Endothelial cell of umbilical vein (primary cell): ENCODE measurements at regions of chr17 and their contacts with region 1.

Region 1: DNA sequence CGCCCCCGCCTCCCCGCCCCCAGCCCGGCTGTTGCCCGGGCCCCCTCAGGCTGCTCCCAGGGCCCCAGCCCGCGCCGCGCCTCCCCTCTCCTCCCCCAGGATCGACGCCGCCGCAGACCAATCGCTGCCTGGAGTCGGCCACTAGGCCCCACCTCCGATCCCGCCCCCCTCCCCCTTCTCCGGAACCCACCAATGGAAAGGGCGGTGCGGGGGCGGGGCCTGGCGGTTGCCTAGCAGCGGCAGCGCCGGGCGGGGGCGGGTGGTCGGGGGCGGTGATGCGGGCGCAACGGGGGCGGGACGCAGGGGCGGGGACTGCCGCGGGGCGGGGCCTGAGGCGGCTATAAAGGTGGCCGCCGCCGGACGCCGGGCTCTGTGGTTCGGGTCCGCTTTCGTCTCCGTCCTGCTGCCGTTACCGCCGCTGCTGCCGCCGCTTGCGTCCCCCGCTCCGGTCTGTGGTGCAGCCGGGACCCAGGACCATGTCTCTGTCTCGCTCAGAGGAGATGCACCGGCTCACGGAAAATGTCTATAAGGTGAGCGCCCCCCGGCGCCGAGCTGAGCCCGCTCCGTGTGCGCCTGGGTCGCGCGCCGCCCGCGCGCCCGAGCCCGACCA is at the start of gene BAIAP2:
- DNase-seq: peak; percentile 88
- H3K4me3 ChIP-seq: peak within 1 kb of the TSS; percentile 43 to 72 (median 67)
- H3K27ac ChIP-seq: peak within 1 kb of the TSS; percentile 9
- H3K4me1 ChIP-seq: peaks cover 10% of the 10 kb centered on the region
- H3K27me3 ChIP-seq: no peaks in the 10 kb centered on the region
- CTCF ChIP-seq: peak in 1 of 2 donors; percentile 14
- POLR2A ChIP-seq: peak; percentile 99
- total RNA-seq, gene BAIAP2: 18.6 and 21.4 TPM in 2 replicates

Region 2: DNA sequence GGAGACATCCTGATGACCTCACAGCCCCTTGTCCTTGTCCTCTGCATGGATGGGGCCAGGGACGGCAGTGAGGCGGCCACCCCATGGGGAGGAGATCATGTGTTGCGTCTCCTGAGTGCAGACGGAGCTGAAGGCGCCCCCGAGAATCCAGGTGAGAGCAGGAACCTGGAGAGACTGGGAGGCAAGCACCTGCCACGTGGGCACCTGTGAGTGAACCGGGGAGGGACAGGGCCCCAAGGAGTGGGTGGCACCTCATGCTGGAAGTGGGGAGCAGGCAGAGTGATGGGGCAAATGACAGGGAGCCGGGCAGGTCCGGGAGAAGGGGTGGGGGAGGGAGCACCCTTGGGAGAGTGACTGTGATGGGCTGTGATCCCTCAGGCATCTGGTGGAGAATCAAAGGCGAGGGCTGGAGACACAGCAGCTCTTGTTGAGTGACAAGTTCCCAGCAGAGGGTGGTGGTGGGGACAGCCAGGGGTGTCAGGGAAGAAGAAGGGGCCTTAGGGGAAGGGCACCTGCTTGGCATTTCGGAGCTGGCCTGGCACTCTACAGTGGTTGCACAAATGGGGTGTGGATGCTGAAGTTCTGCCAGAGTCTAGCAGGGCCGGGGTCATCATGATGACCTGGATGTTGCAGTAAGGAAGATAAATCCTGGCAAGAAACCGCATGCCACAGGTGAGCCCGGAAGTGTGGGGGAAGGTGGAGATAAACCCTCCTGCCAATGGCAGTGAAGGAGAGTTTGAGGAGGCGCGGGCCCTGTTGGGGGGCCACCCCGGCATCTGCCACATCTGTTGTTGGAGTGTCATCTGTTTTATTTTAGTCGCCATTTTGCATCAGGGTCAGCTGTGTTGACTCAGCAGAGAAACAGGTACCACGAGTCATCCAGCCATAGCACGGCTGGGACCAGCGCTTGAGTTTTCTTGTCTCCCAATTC is 217.3 kb before region 1 on chr17:
- CTCF ChIA-PET with region 1: no interaction called
- POLR2A ChIA-PET with region 1: no interaction called
- dilution Hi-C with region 1: no loop called
- intact Hi-C with region 1: no loop called
- DNase-seq: no peak
- H3K4me3 ChIP-seq: no peak overlapping the region
- H3K27ac ChIP-seq: no peak overlapping the region
- H3K4me1 ChIP-seq: no peaks in the 10 kb centered on the region
- H3K27me3 ChIP-seq: no peaks in the 10 kb centered on the region
- CTCF ChIP-seq: no peak
- POLR2A ChIP-seq: no peak

Region 3: GRCh38 chr17:81018044-81018802 is 16.7 kb before region 1 on chr17:
- CTCF ChIA-PET with region 1: interaction called, 19 read pairs
- POLR2A ChIA-PET with region 1: interaction called, 4 read pairs
- dilution Hi-C with region 1: no loop called
- intact Hi-C with region 1: no loop called
- DNase-seq: peak; percentile 65
- H3K4me3 ChIP-seq: peak overlapping the region in 2 of 3 experiments; percentile 28 to 51
- H3K27ac ChIP-seq: peak overlapping the region; percentile 29
- H3K4me1 ChIP-seq: peaks cover 12% of the 10 kb centered on the region
- H3K27me3 ChIP-seq: no peaks in the 10 kb centered on the region
- CTCF ChIP-seq: no peak
- POLR2A ChIP-seq: peak; percentile 50

Region 4: GRCh38 chr17:81044764-81045589 is 10.1 kb after region 1 on chr17:
- CTCF ChIA-PET with region 1: no interaction called
- POLR2A ChIA-PET with region 1: interaction called, 5 read pairs
- dilution Hi-C with region 1: no loop called
- intact Hi-C with region 1: loop called (anchors 1 kb)
- DNase-seq: peak; percentile 85
- H3K4me3 ChIP-seq: no peak overlapping the region
- H3K27ac ChIP-seq: peak overlapping the region; percentile 43
- H3K4me1 ChIP-seq: peaks cover 29% of the 10 kb centered on the region
- H3K27me3 ChIP-seq: no peaks in the 10 kb centered on the region
- CTCF ChIP-seq: no peak
- POLR2A ChIP-seq: no peak

Region 5: DNA sequence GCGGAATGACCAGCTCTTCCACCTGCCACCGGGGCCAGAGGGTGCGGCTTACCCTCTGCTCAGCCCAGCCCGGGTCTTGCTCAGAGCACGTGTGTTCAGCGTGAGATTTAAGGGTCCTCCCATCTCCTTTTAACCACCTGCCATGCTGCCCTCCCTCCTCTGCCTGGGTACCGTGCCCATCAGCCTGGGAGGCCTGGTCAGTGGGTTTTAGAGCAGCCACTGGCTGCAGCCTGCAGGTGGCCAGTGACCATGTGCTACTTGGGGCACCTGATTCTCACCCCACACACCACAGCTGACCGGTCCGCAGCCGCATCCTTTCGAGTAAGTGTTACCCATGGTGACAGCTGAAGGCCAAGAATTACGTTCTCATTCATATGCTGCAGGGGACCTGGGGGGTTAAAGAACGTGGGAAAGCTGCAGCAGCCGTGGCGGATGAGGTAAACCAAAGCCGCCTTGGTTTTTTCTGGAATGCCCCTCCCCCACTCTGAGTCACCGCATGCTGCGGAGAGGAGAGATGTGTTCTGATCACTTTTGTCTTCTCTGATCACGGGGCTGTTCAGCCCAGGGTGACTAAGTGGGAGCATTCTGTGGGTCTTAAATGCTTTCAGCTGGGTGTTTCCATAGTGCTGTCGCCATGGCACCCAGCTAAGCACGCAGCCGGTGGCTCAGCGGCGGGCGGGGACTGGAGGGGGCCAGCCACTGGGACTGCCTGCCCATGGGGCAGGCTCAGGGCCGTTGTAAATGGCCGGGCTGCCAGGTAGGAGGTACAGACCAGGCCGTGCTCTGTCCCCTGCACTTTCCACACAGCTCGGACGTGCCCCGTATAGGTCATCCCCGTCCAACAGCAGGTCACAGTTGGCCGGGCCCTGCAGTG is 59.9 kb after region 1 on chr17:
- CTCF ChIA-PET with region 1: interaction called, 23 read pairs
- POLR2A ChIA-PET with region 1: no interaction called
- dilution Hi-C with region 1: no loop called
- intact Hi-C with region 1: loop called (anchors 1 kb)
- DNase-seq: peak; percentile 78
- H3K4me3 ChIP-seq: no peak overlapping the region
- H3K27ac ChIP-seq: no peak overlapping the region
- H3K4me1 ChIP-seq: peaks cover 8% of the 10 kb centered on the region
- H3K27me3 ChIP-seq: no peaks in the 10 kb centered on the region
- CTCF ChIP-seq: no peak
- POLR2A ChIP-seq: no peak

Region 6: GRCh38 chr17:81222906-81223761 is 188.2 kb after region 1 on chr17 and contains the start of gene CEP131:
- CTCF ChIA-PET with region 1: no interaction called
- POLR2A ChIA-PET with region 1: no interaction called
- dilution Hi-C with region 1: no loop called
- intact Hi-C with region 1: loop called (anchors 5 kb)
- DNase-seq: peak; percentile 98
- H3K4me3 ChIP-seq: peak within 1 kb of the TSS; percentile 64 to 94 (median 85)
- H3K27ac ChIP-seq: no peak within 1 kb of the TSS
- H3K4me1 ChIP-seq: peaks cover 14% of the 10 kb centered on the region
- H3K27me3 ChIP-seq: no peaks in the 10 kb centered on the region
- CTCF ChIP-seq: no peak
- POLR2A ChIP-seq: peak; percentile 62
- total RNA-seq, gene CEP131: 17.9 and 19.7 TPM in 2 replicates